ENCODE measurements at regions of chr9 and their contacts with region 1.

Region 1: DNA sequence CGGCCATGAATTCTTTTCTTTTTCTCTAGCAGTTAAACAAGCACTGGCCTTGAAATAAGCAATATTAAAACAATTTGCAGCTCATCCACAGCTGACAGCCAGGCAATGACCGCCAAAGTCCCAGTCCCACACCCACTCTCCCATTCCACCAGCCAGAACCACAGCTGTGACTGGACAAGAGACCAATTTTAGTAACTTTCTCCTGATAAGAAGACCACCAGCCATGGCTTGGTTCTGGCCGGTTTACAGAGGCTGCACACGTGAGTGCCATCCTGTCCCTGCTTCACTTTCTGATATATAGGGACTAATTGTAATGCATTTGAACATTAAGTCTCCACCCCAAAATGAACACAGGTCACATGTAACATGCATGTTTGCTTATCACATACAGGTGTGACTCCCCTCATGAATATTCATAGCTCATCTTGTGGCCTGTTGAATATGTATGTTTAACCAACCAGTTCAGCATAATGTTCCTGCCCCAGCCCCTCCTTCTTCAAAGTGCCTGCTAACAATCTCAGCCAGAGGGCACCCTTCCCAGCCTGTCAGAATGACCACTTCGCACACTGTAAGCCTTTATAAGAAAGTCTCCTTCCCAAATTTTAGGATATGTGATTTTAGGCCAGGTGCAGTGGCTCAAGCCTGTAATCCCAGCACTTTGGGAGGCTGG is 23.9 kb upstream of the FANCC start:
- DNase-seq: no peak
- H3K4me3 ChIP-seq: no peak overlapping the region
- H3K27ac ChIP-seq: no peak overlapping the region
- H3K4me1 ChIP-seq: no peaks in the 10 kb centered on the region
- H3K27me3 ChIP-seq: no peaks in the 10 kb centered on the region
- CTCF ChIP-seq: peak in 3 of 4 experiments; percentile 11 to 45 (median 33)
- EP300 ChIP-seq: no peak
- POLR2A ChIP-seq: no peak

Region 2: DNA sequence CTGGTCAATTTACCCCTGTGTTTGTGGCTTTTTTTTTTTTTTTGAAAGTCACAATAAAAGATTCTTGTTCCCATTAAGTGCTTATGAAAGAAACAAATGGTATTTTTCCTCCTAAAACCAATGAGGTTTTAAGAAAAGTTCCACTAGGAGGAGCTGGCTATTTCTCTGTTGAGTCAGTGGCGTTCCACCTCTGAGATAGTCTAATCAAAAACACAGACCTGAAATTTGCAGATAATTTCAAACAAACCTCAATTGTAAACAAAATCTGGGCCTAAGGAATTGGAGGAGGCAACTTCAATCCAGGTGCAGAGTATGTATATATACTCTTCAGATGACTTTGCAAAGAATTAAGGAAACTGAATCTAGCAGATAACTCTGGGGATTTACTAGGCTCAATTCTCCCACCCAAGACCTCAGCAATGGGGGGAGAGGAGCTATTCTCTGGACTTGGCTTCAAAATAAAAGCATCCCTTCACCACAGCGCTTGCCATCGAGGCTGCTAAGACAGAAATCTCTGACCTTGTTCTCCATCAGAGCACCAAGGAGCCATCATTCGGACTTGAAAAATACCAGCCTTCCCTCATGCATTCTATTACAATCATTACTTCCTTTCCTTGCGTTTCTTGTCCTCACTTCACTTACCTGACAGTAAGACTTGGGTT is 76.3 kb before region 1 on chr9:
- intact Hi-C with region 1: no loop called
- DNase-seq: no peak
- H3K4me3 ChIP-seq: no peak overlapping the region
- H3K27ac ChIP-seq: no peak overlapping the region
- H3K4me1 ChIP-seq: peaks cover 0 to 8% (median 6%) of the 10 kb centered on the region in 4 donors
- H3K27me3 ChIP-seq: no peaks in the 10 kb centered on the region
- CTCF ChIP-seq: peak in 1 of 4 experiments; percentile 27
- EP300 ChIP-seq: no peak
- POLR2A ChIP-seq: no peak

Region 3: GRCh38 chr9:95373069-95373681 is 31.7 kb after region 1 on chr9:
- intact Hi-C with region 1: no loop called
- DNase-seq: no peak
- H3K4me3 ChIP-seq: no peak overlapping the region
- H3K27ac ChIP-seq: no peak overlapping the region
- H3K4me1 ChIP-seq: peaks cover 0 to 26% (median 19%) of the 10 kb centered on the region in 4 donors
- H3K27me3 ChIP-seq: no peaks in the 10 kb centered on the region
- CTCF ChIP-seq: no peak
- EP300 ChIP-seq: no peak
- POLR2A ChIP-seq: no peak

Region 4: DNA sequence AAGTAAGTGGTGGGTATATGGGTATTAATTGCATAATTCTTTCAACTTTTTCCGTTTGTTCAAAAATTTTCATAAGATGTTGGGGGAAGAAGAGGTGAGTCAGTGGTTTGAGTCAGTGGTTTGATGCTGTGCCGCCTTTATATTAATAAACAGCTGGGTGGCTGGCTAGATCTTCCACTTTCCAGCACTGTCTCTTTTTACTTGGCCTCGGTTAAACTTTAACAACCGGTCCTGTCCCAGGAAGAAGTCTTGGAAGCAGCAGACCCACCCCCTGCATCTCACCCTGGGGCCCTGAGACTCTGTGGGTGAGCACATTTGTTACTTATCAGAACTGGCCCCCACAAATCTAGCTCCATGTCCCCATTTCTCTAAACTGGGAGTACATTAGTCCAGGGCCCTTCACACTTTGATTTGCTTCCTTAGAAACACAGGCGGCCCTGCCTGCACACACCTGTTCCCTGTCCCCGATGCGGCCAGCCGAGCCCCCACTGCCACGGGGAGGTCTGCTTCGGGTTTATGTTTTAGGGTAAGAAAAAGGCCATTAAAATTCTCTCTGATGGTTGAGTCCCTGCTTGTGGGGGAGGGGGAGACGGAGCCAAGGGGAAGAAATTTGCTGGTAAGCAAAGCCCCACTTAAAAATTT is 84.6 kb after region 1 on chr9:
- intact Hi-C with region 1: no loop called
- DNase-seq: no peak
- H3K4me3 ChIP-seq: peak overlapping the region in 3 of 4 donors; percentile 48 to 50 (median 49)
- H3K27ac ChIP-seq: peak overlapping the region; percentile 62 to 83 (median 66)
- H3K4me1 ChIP-seq: peaks cover 0 to 16% (median 10%) of the 10 kb centered on the region in 4 donors
- H3K27me3 ChIP-seq: no peaks in the 10 kb centered on the region
- CTCF ChIP-seq: no peak
- EP300 ChIP-seq: no peak
- POLR2A ChIP-seq: no peak

Region 5: GRCh38 chr9:95450171-95451064 is 109.0 kb after region 1 on chr9:
- intact Hi-C with region 1: loop called (anchors 5 kb)
- DNase-seq: peak; percentile 72
- H3K4me3 ChIP-seq: no peak overlapping the region
- H3K27ac ChIP-seq: peak overlapping the region in 3 of 4 donors; percentile 67 to 72 (median 71)
- H3K4me1 ChIP-seq: peaks cover 0 to 32% (median 27%) of the 10 kb centered on the region in 4 donors
- H3K27me3 ChIP-seq: no peaks in the 10 kb centered on the region
- CTCF ChIP-seq: no peak
- EP300 ChIP-seq: peak in 3 of 4 donors; percentile 47 to 73 (median 64)
- POLR2A ChIP-seq: no peak

Measured in sigmoid colon (tissue), 7 donors.